Gastrocnemius medialis (tissue), 4 donors: ENCODE measurements at regions of chr22 and their contacts with region 1.

Region 1: GRCh38 chr22:29837780-29838598 is at the start of gene ASCC2:
- DNase-seq: peak; percentile 99 to 100
- ATAC-seq: peak; percentile 93 to 97
- H3K4me3 ChIP-seq: peak within 1 kb of the TSS; percentile 69 to 99 (median 96)
- H3K27ac ChIP-seq: peak within 1 kb of the TSS; percentile 82 to 95 (median 90)
- H3K4me1 ChIP-seq: peaks cover 20 to 44% of the 10 kb centered on the region in 2 donors
- H3K27me3 ChIP-seq: no peaks in the 10 kb centered on the region
- CTCF ChIP-seq: peak in 2 of 5 experiments; percentile 21 to 32
- POLR2A ChIP-seq: peak; percentile 88 to 96
- total RNA-seq, gene ASCC2: 26.4 to 45.2 (median 35.6) TPM

Region 2: DNA sequence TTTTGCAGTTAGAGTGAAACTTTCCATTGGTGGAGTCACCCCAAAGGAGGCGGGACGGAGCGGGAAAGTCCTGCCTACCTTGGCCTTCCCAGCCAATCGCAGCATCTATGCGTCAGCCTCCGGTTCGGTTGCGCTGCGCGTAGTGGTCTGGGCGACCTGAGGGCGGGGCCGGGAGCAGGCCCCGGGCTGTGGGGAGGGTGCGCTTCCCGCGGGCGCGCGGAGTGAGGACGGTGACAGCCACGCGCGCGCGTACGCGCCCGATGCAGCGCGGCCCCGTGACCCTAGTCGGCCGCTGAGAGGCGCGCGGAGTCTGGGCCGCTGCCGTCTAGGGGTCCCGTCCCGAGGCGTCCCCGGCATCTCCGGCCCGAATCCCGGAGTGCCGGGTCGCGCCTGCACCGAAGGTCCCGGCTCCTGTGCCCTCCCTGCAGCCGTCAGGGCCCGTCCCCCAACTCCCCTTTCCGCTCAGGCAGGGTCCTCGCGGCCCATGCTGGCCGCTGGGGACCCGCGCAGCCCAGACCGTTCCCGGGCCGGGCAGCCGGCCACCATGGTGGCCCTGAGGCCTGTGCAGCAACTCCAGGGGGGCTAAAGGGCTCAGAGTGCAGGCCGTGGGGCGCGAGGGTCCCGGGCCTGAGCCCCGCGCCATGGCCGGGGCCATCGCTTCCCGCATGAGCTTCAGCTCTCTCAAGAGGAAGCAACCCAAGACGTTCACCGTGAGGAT is 234.5 kb before region 1 on chr22 and contains the start of gene NF2:
- in situ Hi-C with region 1: no loop called
- intact Hi-C with region 1: loop called (anchors 10 kb)
- DNase-seq: peak; percentile 98 to 99
- ATAC-seq: peak; percentile 99 to 100
- H3K4me3 ChIP-seq: peak within 1 kb of the TSS; percentile 94 to 99 (median 96)
- H3K27ac ChIP-seq: peak within 1 kb of the TSS; percentile 97 to 99 (median 98)
- H3K4me1 ChIP-seq: peaks cover 11 to 16% of the 10 kb centered on the region in 2 donors
- H3K27me3 ChIP-seq: no peaks in the 10 kb centered on the region
- CTCF ChIP-seq: peak in 1 of 5 experiments; percentile 8
- POLR2A ChIP-seq: peak; percentile 60 to 71
- total RNA-seq, gene NF2: 34.7 to 66.3 (median 48.2) TPM

Region 3: DNA sequence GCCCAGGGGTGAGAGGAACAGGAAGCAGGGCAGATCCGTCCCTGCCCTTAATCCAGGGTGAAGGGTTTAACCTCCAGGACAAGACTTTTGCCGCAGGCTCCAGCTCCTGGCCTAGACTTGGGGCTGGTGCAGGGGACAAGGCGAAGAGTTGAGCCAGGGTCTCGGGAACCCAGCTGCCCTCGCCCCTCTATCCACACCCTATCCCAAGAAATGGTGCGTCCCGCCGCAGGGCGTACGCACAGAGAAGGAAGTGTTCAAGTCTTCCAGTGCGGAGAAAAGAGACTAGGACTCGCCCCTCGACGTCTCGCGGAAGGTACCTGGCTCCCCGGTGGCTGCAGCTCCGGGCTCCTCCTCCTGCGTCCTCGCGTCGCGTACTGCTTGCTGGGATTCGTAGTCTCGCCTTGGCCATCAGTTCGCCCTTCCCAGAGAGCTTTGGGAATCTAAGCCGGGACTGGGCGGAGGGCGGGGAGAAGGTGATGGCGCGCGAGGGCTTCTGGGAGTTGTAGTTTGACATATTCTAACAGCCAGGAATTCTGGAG is 71.3 kb before region 1 on chr22 and contains the start of gene ZMAT5:
- in situ Hi-C with region 1: no loop called
- intact Hi-C with region 1: loop called (anchors 5 kb)
- DNase-seq: peak; percentile 95 to 96
- ATAC-seq: peak; percentile 93 to 97
- H3K4me3 ChIP-seq: peak within 1 kb of the TSS; percentile 84 to 96 (median 88)
- H3K27ac ChIP-seq: peak within 1 kb of the TSS; percentile 94 to 95 (median 95)
- H3K4me1 ChIP-seq: peaks cover 41 to 48% of the 10 kb centered on the region in 2 donors
- H3K27me3 ChIP-seq: no peaks in the 10 kb centered on the region
- CTCF ChIP-seq: no peak
- POLR2A ChIP-seq: peak in 1 of 2 donors; percentile 88
- total RNA-seq, gene ZMAT5: 23.8 to 38.6 (median 33.8) TPM

Region 4: DNA sequence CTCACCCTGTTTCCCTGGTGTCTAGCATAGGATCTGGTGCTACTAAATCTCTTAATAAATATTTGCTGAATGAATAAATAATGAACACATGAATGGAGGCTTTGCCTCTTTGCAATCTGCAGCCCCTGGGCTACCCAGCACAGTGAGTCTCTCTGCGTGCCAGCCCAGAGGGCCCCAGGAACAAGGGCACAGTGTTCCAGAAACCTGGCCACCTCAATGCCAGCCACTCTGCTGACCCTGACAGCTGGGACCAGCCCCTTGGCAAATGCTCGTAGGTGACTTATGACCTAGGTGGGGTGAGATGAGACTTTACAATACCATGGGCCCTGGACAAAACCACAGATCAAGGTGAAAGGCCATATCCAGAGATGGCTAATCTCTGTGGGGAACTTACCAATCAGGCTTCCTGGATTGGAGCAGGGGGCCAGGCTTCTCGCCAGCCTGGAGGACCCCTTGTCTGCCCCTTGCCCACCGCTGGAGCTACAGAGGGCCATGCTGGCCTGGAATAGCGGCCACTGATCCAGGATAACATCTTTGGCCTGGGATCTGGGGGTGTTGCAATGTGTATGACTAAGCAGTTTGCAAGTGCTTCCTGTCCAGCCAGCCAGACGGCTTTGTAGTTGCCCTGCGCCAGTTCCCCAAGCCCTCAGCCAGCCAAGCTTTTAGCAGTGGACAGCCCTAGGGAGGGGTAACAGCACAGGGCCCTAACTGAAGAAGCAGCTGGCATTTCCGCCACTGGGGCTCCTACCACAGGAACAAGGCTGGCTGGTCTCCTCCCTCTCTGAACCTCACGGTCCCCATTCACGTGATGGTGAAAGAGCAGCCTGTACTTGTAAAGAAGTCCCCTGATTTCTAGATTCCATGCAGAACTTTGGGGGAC is 38.9 kb before region 1 on chr22:
- in situ Hi-C with region 1: no loop called
- intact Hi-C with region 1: loop called (anchors 1 kb)
- DNase-seq: peak; percentile 95 to 99
- ATAC-seq: peak; percentile 91 to 95
- H3K4me3 ChIP-seq: peak overlapping the region in 3 of 4 donors; percentile 16 to 35 (median 30)
- H3K27ac ChIP-seq: peak overlapping the region; percentile 88 to 94 (median 92)
- H3K4me1 ChIP-seq: peaks cover 53 to 60% of the 10 kb centered on the region in 2 donors
- H3K27me3 ChIP-seq: no peaks in the 10 kb centered on the region
- CTCF ChIP-seq: peak in 2 of 5 experiments; percentile 14 to 17
- POLR2A ChIP-seq: peak; percentile 19 to 28

Region 5: DNA sequence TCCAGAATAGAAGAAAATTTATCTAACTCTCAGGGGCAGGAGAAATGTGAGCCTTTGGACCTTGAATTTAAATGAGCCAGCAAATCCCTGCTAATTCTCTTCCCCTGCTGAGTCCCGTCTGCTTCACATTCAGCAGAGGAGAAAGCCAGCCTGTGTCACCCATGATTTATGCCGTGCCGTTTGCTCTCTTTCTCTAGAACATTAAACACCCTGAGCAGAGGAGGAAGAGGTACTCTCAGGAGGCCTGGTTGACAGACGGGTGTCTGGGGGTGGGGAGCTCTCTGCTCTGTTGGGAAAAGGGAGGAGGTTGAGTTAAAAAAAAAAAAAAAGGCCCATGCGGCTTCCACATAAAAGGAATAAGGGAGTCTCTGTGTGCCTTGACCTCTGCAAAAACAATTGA is 33.7 kb after region 1 on chr22:
- in situ Hi-C with region 1: no loop called
- intact Hi-C with region 1: loop called (anchors 1 kb)
- DNase-seq: peak; percentile 22 to 70
- ATAC-seq: peak; percentile 73 to 88
- H3K4me3 ChIP-seq: no peak overlapping the region
- H3K27ac ChIP-seq: peak overlapping the region; percentile 72 to 95 (median 86)
- H3K4me1 ChIP-seq: peaks cover 27 to 33% of the 10 kb centered on the region in 2 donors
- H3K27me3 ChIP-seq: no peaks in the 10 kb centered on the region
- CTCF ChIP-seq: no peak
- POLR2A ChIP-seq: no peak

Region 6: DNA sequence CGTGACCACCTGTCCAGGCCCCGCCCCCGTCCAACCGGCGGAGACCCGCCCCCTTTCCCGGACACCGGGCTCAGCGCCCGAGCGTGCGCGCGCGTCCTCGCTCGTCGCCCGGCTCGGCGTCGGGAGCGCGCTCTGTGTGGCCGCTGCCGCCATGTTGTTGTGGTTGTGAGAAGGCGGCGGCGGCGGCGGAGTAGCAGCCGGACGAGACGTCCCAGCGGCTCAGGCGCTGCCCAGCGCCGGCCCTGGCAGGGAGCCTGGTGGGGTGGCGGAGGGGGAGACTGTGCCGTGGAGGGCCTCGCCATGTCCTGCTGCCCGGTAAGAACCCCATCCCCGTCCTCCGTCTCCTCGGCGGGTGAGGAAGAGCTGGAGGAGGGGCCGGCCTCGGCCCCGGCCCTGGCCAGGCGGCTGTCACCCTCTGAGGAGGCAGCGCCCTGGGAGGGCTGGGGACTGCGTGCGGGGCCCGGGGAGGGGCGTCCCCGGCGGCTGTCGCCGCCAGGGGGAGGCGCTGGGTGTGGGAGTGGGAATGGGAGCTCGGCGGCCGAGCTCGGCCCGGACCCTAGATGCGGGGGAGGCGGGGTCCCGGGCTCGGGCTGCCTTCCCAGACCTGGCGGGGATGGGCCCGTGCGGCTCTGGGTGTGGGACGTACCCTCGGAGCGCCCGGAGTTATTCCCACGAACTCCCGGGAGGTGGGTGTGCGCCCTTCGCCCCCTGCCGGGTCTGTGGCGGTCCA is 45.2 kb after region 1 on chr22 and contains the start of gene MTMR3:
- in situ Hi-C with region 1: no loop called
- intact Hi-C with region 1: loop called (anchors 1 kb)
- DNase-seq: peak; percentile 87 to 88
- ATAC-seq: peak; percentile 77 to 82
- H3K4me3 ChIP-seq: peak within 1 kb of the TSS; percentile 75 to 99 (median 92)
- H3K27ac ChIP-seq: peak within 1 kb of the TSS; percentile 97 to 100 (median 99)
- H3K4me1 ChIP-seq: peaks cover 42 to 43% of the 10 kb centered on the region in 2 donors
- H3K27me3 ChIP-seq: no peaks in the 10 kb centered on the region
- CTCF ChIP-seq: peak; percentile 17 to 78 (median 70)
- POLR2A ChIP-seq: peak; percentile 75 to 76
- total RNA-seq, gene MTMR3: 36.6 to 42.1 (median 37.1) TPM